AG04449 (cell line): ENCODE measurements at regions of chr19 and their contacts with region 1.

Region 1: DNA sequence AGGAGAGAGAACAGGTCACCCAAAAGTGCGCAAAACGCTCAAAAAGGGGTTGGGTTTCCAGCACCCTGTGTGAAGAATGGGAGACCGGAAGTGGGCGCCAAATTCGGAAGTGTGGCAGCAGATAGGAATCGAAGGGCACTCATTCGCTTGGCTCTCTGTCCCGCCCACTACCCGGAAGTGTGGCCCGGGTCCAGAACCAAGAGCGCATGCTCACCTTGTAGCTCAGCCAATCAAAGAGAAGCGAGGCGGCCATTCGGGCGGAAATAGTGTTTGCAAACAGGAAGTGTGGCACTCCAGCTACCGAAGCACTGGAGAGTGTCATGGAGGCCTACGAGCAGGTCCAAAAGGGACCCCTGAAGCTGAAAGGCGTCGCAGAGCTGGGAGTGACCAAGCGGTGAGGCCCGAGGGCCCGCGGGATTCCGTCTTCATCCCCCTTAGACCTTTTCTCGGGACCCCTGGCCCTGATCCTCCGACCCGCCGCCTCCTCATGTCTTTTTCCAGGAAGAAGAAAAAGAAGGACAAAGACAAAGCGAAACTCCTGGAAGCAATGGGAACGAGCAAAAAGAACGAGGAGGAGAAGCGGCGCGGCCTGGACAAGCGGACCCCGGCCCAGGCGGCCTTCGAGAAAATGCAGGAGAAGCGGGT is at the start of gene FAM32A:
- DNase-seq: peak; percentile 95
- H3K4me3 ChIP-seq: peak within 1 kb of the TSS; percentile 95
- CTCF ChIP-seq: peak; percentile 5

Region 2: GRCh38 chr19:15629003-15629880 is 556.0 kb before region 1 on chr19:
- CTCF ChIA-PET with region 1: interaction called, 12 read pairs
- POLR2A ChIA-PET with region 1: no interaction called
- DNase-seq: no peak
- H3K4me3 ChIP-seq: no peak overlapping the region
- CTCF ChIP-seq: peak; percentile 88

Region 3: DNA sequence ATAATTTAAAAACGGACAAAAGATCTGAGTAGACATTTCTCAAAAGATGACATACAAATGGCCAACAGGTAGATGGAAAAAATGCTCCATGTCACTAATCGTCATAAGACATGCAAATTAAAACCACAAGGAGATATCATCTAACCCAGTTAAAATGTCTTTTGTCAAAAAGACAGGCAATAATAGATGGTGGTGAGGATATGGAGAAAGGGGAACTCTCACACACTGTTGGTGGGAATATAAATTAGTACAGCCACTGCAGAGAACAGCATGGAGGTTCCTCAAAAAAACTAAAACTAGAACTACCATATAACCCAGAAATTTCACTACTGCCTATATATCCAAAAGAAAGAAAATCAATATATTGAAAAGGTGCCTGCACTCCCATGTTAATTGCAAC is 198.5 kb before region 1 on chr19:
- CTCF ChIA-PET with region 1: no interaction called
- POLR2A ChIA-PET with region 1: no interaction called
- DNase-seq: no peak
- H3K4me3 ChIP-seq: no peak overlapping the region
- CTCF ChIP-seq: no peak

Region 4: GRCh38 chr19:16035601-16036297 is 149.5 kb before region 1 on chr19:
- CTCF ChIA-PET with region 1: interaction called, 101 read pairs
- POLR2A ChIA-PET with region 1: interaction called, 3 read pairs
- DNase-seq: no peak
- H3K4me3 ChIP-seq: no peak overlapping the region
- CTCF ChIP-seq: no peak

Region 5: DNA sequence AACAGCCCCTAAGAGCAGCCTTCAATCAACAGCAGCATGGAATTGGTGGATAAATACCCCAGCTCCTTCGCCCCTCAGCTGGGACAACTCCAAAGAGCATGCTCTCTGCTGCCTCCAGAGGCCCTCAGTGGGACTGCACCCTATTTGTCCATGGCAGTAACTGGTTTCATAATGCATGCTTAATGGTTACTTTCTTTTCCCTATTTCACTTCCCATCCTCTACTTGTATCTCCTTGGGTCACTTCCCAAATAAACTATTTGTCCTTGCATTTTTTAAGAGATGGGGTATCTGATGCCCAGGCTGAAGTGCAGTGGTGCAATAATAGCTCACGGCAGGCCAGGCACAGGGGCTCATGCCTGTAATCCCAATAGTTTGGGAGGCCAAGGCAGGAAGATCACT is 122.5 kb before region 1 on chr19:
- CTCF ChIA-PET with region 1: interaction called, 14 read pairs
- POLR2A ChIA-PET with region 1: interaction called, 3 read pairs
- DNase-seq: no peak
- H3K4me3 ChIP-seq: no peak overlapping the region
- CTCF ChIP-seq: peak; percentile 84

Region 6: GRCh38 chr19:16111160-16111908 is 73.9 kb before region 1 on chr19 and contains the start of gene RAB8A:
- CTCF ChIA-PET with region 1: interaction called, 18 read pairs
- POLR2A ChIA-PET with region 1: no interaction called
- DNase-seq: peak; percentile 93
- H3K4me3 ChIP-seq: peak within 1 kb of the TSS; percentile 92
- CTCF ChIP-seq: peak; percentile 90